Adrenal gland (tissue), 19 donors: ENCODE measurements at regions of chr5 and their contacts with region 1.

Region 1: DNA sequence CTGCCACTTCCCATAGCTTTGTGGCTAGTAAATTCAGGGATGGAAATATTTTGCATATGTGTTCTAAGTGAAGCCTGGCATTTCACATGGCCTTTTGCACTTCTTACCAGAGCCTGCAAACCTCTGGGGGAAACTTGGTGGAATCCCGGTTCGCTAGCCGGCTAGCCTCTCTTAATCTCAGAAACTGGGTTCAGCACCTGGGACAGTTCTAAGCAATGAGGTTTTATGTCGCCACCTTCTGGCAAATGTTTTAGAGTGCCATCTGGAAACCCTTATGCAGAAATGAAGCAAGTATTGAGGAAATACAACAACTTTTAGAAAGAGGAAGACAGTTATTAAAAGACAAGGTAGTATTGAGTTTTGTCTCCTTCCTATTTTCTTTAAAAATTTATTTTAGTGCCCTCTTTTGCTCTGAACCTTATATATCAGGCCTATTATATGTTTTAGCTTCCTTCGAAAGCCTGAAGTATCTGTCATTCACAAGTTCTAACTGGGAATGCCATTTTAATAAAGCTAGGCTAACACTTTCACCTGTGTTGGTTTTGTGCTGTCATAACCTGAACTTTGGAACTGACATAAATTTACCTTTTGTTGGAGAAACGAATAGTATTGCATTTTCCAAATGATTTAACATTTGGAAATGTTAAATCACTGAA is 963 bp upstream of the HTR1A start:
- DNase-seq: peak; percentile 37 to 65 (median 52)
- H3K4me3 ChIP-seq: no peak overlapping the region
- H3K27ac ChIP-seq: no peak overlapping the region
- H3K4me1 ChIP-seq: no peaks in the 10 kb centered on the region
- H3K27me3 ChIP-seq: peaks cover 34% of the 10 kb centered on the region
- CTCF ChIP-seq: peak; percentile 26 to 56 (median 44)
- POLR2A ChIP-seq: no peak

Region 2: DNA sequence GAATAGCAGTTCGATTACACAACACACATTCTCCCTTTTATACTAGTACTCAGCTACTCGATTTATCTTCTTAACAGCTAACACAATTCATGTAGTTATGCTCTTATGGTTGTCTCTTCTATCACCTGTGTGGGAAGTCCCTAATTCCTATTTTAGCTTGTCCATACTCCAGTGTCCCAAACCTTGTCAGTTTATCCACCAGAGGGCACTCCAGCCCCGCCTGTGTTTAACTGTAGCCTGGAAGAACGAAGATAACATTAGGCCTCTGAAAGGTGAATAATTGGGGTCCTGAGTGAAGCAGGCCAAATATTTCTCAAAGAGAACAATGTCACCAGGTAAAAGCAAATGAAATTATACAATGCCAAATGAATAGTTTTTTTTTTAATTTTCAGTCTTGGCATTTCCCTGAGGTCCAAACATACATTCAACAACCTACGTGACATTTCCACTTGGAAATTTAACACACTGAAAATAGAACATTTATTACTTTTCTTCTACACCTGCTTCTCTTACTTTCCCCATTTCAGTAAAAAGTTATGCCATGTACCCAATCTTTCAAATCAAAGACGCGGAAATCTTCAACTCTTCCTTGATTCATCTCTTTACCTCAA is 561.7 kb before region 1 on chr5:
- intact Hi-C with region 1: loop called in 1 of 2 experiments (anchors 5 kb)
- DNase-seq: peak; percentile 35 to 84 (median 65)
- H3K4me3 ChIP-seq: no peak overlapping the region
- H3K27ac ChIP-seq: no peak overlapping the region
- H3K4me1 ChIP-seq: no peaks in the 10 kb centered on the region
- H3K27me3 ChIP-seq: no peaks in the 10 kb centered on the region
- CTCF ChIP-seq: peak; percentile 49 to 72 (median 65)
- POLR2A ChIP-seq: no peak

Region 3: DNA sequence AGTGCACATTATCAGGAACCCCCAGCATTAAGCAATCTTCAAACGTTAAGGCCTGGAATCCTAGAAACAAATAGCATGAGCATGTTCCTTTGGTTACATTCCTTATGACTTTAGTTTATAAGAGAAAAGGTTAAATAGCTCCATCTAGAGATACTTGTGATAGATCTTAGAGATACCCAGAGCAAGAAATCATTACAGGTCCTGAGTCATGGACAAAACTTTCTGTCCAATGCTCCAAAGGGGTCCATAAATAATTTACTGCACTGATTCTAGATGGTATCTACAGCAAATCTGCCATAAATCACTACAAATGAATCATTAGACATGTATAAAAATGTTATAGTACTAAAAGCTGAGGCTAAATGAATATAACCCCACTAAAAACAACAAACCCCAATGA is 140.6 kb before region 1 on chr5:
- intact Hi-C with region 1: loop called in 1 of 2 experiments (anchors 5 kb)
- DNase-seq: no peak
- H3K4me3 ChIP-seq: no peak overlapping the region
- H3K27ac ChIP-seq: no peak overlapping the region
- H3K4me1 ChIP-seq: no peaks in the 10 kb centered on the region
- H3K27me3 ChIP-seq: no peaks in the 10 kb centered on the region
- CTCF ChIP-seq: peak in 1 of 6 experiments; percentile 11
- POLR2A ChIP-seq: no peak

Region 4: DNA sequence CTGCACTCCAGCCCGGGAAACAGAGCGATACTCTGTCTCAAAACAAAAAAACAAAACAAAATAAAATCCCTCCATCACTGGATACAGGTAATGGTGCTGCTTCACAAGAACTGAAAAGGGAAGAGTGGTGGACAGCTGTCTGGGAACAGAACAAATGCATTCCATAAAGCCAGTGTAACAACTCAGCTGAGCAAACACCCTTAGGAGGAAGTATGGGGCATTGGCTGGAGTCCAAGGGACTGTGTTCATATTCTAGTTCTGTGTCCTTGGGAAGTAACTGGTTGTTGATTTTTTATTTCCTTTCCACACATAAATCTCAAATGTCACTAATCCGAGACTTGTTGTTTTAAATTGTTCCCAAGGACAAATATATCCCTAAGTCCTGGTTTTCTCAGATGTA is 39.3 kb before region 1 on chr5:
- intact Hi-C with region 1: no loop called
- DNase-seq: peak in 2 of 7 donors; percentile 4 to 15
- H3K4me3 ChIP-seq: no peak overlapping the region
- H3K27ac ChIP-seq: no peak overlapping the region
- H3K4me1 ChIP-seq: no peaks in the 10 kb centered on the region
- H3K27me3 ChIP-seq: no peaks in the 10 kb centered on the region
- CTCF ChIP-seq: no peak
- POLR2A ChIP-seq: no peak

Region 5: GRCh38 chr5:64074533-64074932 is 111.3 kb after region 1 on chr5:
- intact Hi-C with region 1: no loop called
- DNase-seq: peak in 1 of 7 donors; percentile 4
- H3K4me3 ChIP-seq: no peak overlapping the region
- H3K27ac ChIP-seq: no peak overlapping the region
- H3K4me1 ChIP-seq: no peaks in the 10 kb centered on the region
- H3K27me3 ChIP-seq: no peaks in the 10 kb centered on the region
- CTCF ChIP-seq: peak in 5 of 6 experiments; percentile 23 to 51 (median 39)
- POLR2A ChIP-seq: no peak

Region 6: DNA sequence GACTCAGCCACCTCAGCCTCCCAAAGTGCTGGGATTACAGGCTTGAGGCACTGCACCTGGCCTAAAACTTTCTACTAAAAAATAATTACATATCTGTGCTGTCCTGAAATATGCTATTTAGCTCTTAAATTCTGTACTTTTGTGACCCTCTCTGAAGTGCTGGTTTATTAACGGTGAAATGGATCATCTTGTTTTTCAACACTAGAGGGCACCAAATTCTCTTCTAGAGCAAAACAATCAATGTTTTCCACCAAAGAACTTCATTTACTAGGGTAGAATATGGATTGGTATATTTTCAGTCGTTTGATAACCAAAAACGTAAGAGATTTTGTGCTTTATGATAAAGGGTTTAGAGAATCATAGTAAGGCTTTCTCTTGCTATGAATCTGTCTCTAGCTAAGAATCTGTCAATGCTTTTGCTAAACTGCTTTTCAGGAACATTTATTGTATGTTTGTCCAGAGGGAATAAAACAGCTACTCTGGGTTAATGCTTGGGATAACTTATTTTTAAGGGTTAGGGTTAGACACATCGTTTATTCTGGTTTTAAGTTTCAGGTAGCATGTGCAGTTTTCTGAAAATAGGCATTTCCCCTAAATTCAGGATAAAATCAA is 266.1 kb after region 1 on chr5:
- intact Hi-C with region 1: no loop called
- DNase-seq: no peak
- H3K4me3 ChIP-seq: no peak overlapping the region
- H3K27ac ChIP-seq: no peak overlapping the region
- H3K4me1 ChIP-seq: peaks cover 0 to 5% of the 10 kb centered on the region in 2 donors
- H3K27me3 ChIP-seq: no peaks in the 10 kb centered on the region
- CTCF ChIP-seq: peak; percentile 55 to 80 (median 72)
- POLR2A ChIP-seq: no peak